ENCODE measurements at regions of chr1 and their contacts with region 1.

Region 1: DNA sequence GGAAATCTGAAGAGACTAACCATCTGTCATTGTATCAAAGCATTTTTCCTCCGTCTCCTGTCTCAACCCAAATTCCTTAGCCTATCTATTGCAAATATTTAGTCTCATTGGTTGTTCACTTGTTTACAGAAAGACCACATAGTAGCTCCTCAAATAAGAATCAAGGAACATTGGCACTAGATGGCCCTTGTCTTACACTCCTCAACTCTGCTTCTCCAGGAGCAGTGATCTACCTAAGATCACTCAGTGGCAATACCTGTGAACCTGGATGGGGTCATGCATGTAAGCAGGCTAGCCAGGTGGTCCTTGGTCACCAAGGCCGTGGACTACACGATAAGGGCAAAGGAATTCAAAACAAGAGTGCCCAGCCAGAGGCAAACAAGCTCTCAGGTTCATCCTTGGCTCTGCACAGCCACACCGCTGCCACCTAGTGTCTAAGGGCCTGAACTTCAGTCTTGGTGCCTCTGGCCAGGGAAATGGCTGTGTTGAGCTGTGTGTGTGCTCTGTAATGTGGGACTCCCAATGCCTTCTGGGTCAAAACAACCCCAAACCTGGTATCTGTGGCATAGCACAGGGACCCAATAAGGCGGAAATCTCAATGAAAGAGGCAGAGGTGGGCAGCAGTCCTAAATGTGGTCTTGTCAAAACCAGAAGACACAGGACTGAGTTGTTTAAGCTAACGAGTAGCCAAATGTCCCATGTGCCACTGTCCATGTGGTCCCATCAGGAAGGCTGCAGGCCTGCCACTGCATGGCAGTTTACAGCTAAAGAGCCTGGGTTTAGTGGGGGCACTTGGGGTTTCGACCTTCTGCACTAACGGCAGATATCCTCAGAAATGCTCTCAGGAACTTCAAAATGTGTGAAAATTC is 54.5 kb downstream of the GPR161 start:
- DNase-seq: peak; percentile 91
- H3K4me3 Mint-ChIP-seq: no peak overlapping the region
- H3K27ac Mint-ChIP-seq: no peak overlapping the region
- H3K4me1 Mint-ChIP-seq: peaks cover 3% of the 10 kb centered on the region
- H3K27me3 Mint-ChIP-seq: no peaks in the 10 kb centered on the region

Region 2: DNA sequence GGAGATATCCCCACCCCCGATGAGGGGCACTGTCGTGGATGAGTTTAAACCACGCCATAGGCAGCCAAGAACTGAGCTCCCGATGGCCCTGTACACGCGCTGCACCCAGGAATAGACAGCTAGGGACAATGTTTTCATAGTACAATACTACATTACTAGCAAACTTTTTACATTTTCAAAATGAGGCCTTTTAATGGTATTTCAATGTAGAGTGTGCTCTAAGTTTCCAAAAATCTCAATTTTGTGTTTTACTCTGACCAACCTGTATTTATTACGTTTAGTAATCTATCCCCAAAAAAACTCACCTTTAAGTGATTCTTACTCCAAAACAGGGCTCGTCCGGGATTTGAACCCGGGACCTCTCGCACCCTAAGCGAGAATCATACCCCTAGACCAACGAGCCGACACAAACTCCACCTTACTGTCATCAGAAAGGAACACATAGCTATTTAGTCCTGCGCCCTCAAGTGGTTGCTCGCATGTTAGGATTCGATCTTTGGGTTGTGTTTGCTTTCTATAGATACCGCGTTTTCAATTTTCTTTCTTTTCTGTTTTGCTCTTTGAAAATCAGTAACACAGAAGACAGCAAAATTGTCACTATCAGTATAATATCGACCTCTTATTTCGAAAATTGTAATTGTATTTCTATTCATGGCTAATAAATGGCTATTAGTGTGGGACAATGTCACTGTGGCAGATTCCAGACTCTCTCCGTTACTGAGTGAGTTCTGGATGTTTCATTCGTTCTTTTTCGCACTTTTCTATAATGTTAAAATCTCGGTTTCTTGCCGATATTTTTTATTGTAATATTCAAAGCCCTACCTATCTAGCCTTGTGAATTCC is 366.9 kb before region 1 on chr1:
- intact Hi-C with region 1: loop called (anchors 5 kb)
- DNase-seq: peak; percentile 97
- H3K4me3 Mint-ChIP-seq: peak overlapping the region; percentile 96
- H3K27ac Mint-ChIP-seq: peak overlapping the region; percentile 98
- H3K4me1 Mint-ChIP-seq: peaks cover 56% of the 10 kb centered on the region
- H3K27me3 Mint-ChIP-seq: peaks cover 13% of the 10 kb centered on the region

Region 3: DNA sequence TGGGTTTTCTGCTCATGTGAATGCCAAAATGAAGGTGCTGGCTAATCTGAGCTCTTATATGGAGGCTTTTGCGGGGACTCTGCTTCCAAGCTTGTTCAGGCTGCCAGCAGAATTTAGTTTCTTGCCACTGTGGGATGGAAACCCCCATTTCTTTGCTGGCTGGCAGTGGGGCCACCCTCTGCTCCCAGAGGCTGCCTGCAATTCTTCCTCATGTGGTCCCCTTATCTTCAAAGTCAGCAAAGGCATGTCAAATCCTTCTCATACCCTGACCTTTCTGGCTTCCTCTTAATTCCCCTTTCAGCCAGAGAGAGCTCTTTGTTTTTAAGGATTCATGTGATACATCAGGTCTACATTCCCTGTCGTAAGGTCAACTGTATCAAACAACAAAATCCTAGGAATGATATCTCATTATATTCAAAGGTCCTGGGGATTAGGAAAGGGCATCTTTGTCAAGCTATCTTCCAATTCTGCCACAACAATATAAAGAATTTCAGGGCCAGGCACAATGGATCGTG is 59.7 kb after region 1 on chr1:
- intact Hi-C with region 1: loop called (anchors 5 kb)
- DNase-seq: no peak
- H3K4me3 Mint-ChIP-seq: no peak overlapping the region
- H3K27ac Mint-ChIP-seq: no peak overlapping the region
- H3K4me1 Mint-ChIP-seq: peaks cover 16% of the 10 kb centered on the region
- H3K27me3 Mint-ChIP-seq: peaks cover 34% of the 10 kb centered on the region

Region 4: DNA sequence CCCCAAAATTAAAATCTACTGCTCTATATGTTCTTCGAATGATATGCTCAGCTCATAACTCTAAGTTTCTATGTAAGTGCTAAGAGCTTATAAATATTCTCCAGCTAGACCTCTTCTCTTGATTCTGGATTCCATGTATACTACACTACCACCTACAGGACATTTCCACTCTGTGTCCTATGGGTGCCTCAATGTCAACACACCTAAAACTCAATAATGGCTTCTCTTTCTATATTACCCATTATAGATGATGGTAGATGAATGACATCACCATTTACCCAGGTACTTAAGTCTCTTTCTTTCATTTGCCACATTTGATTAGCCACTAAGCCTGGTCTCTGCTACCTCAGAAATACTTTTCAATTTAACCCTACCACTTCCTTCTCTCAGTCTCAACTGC is 239.7 kb after region 1 on chr1:
- intact Hi-C with region 1: loop called (anchors 5 kb)
- DNase-seq: no peak
- H3K4me3 Mint-ChIP-seq: no peak overlapping the region
- H3K27ac Mint-ChIP-seq: no peak overlapping the region
- H3K4me1 Mint-ChIP-seq: peaks cover 20% of the 10 kb centered on the region
- H3K27me3 Mint-ChIP-seq: no peaks in the 10 kb centered on the region